GM23248 (cell line): ENCODE measurements at regions of chr20 and their contacts with region 1.

Region 1: DNA sequence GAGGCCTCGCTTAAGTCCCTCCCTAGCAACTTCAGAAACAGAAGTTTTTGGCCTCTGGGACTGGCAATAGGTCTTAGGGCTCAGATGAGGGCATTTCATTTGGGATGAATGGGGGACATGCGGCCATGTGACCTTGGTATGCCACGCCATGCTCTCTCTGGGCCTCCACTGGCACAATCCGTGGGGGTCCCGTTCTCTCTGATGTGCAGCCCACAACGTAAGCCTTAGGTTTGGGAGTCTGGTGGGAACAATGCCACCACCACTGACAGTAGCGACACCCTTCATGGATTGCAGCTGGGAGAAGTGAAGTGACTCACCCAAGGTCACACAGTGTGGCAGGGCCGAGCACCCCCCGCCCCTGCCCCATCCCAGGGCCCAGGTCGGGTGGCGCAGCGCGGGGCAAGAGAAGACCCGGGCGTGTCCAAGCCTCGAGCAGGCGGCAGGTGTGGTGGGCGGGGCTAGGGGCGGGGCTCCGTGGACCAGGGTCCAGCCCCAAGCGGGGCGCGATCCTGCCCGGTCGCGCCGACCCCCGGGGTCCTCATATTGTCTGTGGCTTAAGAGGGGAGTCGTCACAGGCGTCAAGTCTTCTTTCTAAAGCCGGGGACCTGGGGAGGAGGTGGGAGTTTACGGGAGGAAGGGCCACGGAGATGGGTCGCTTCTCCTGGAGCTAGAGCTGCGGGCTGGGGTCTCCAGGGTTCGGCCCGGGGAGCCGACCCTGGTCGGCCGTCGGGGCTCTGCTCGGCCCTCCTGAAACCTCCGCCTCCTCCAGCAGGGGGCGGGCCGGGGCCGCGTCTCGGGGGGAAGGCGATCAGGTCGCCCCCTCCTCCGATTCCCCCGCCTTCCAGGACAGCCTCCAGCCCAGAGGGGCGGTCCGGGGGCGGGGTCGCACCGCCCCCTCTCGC is 698 bp upstream of the CEBPB start:
- DNase-seq: peak; percentile 90
- H3K4me3 ChIP-seq: peak overlapping the region; percentile 92
- H3K27ac ChIP-seq: peak overlapping the region; percentile 98
- H3K4me1 ChIP-seq: peaks cover 10% of the 10 kb centered on the region
- H3K27me3 ChIP-seq: no peaks in the 10 kb centered on the region

Region 2: DNA sequence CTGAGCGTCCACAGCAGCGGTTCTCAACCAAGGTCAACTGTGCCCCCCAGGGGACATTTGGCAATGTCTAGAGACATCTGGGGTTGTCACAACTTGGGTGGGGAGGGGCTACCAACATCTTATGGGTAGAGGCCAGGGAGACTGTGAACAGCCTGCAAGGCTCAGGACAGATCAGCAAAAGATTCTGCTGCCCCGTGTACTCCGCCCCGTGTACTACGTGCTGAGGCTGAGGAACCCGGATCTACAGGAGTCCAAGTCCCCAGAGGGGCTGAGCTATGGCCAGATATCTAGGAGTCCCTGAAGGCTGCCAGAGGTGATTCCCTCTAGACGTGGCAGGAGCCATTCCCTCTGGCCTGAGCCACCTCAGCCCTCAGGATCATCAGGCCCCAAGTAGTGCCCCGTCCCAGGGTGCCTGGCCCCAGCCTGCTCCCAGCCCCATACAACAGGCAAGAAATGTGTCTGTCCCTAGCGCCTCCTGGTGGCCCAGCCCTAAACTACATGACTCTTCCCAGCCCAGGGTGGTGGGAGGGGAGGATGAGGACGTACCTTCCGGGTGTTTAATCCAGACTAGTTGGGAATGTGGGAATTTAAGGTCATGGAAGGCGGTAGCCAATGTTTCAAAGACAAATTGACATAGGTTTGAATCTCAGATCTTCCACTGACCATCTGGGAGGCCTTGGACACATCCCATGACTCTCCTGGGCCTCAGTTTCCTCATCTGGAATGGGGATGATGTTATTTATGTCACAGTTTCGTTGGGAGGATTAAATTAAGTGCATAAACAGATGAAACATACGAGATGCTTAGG is 270.7 kb after region 1 on chr20:
- in situ Hi-C with region 1: loop called (anchors 5 kb)
- DNase-seq: peak; percentile 77
- H3K4me3 ChIP-seq: no peak overlapping the region
- H3K27ac ChIP-seq: no peak overlapping the region
- H3K4me1 ChIP-seq: no peaks in the 10 kb centered on the region
- H3K27me3 ChIP-seq: no peaks in the 10 kb centered on the region

Region 3: GRCh38 chr20:50575847-50576720 is 386.2 kb after region 1 on chr20:
- in situ Hi-C with region 1: loop called (anchors 5 kb)
- DNase-seq: peak; percentile 79
- H3K4me3 ChIP-seq: no peak overlapping the region
- H3K27ac ChIP-seq: no peak overlapping the region
- H3K4me1 ChIP-seq: peaks cover 14% of the 10 kb centered on the region
- H3K27me3 ChIP-seq: no peaks in the 10 kb centered on the region

Region 4: GRCh38 chr20:50731055-50731871 is 541.3 kb after region 1 on chr20 and contains the start of gene PARD6B:
- in situ Hi-C with region 1: loop called (anchors 25 kb)
- DNase-seq: peak; percentile 96
- H3K4me3 ChIP-seq: peak within 1 kb of the TSS; percentile 76
- H3K27ac ChIP-seq: no peak within 1 kb of the TSS
- H3K4me1 ChIP-seq: peaks cover 9% of the 10 kb centered on the region; the same call in 1 of the 2 replicates
- H3K27me3 ChIP-seq: no peaks in the 10 kb centered on the region
- total RNA-seq, gene PARD6B: not detected in 2 replicates